ENCODE measurements at regions of chr9 and their contacts with region 1.

Region 1: GRCh38 chr9:104927912-104928740 is at the start of gene ABCA1:
- DNase-seq: peak; percentile 69
- H3K4me3 ChIP-seq: peak within 1 kb of the TSS; percentile 65 to 86 (median 82)
- H3K27ac ChIP-seq: peak within 1 kb of the TSS; percentile 45
- H3K4me1 ChIP-seq: peaks cover 8% of the 10 kb centered on the region
- H3K27me3 ChIP-seq: no peaks in the 10 kb centered on the region
- CTCF ChIP-seq: no peak
- total RNA-seq, gene ABCA1: 22.5 to 48.2 TPM

Region 2: GRCh38 chr9:104780799-104781395 is 147.2 kb before region 1 on chr9:
- CTCF ChIA-PET with region 1: no interaction called
- dilution Hi-C with region 1: no loop called
- in situ Hi-C with region 1: no loop called
- intact Hi-C with region 1: loop called (anchors 1 kb)
- DNase-seq: peak; percentile 43
- H3K4me3 ChIP-seq: no peak overlapping the region
- H3K27ac ChIP-seq: no peak overlapping the region
- H3K4me1 ChIP-seq: peaks cover 7% of the 10 kb centered on the region
- H3K27me3 ChIP-seq: no peaks in the 10 kb centered on the region
- CTCF ChIP-seq: peak; percentile 50 to 53

Region 3: DNA sequence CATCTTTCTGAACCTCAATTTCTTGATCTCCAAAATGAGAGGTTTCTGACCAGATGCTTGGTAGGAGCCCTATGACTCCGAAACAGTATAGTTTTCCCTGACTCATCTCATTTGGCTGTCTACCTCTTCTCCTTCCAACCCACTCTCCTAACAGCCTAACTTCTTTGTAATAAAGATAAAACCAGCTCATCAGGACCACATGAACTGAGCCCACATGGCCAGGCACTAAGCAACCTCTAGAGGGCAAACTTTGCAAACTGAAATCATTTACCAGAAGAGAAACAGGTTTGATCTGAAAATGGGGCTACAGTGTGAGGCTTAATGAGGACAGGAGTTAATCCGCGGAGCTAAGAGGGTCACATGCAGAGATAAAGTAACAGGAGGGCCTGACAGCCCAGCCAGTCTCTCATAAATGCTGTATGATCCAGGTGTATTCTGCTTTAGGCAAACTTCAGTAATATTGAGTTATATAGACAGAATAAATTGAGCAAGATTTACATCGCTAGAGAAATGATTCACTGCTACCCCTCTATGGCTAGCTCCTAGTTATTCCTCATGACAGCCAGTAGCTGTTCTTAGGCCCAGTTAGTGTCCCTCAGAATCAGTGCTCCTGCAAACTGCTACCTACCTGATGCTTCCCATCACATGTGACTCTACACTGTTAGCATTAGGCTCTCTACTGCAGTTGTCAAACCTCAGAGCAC is 64.8 kb before region 1 on chr9:
- CTCF ChIA-PET with region 1: interaction called, 6 read pairs
- dilution Hi-C with region 1: no loop called
- in situ Hi-C with region 1: no loop called
- intact Hi-C with region 1: loop called (anchors 1 kb)
- DNase-seq: peak; percentile 69
- H3K4me3 ChIP-seq: no peak overlapping the region
- H3K27ac ChIP-seq: no peak overlapping the region
- H3K4me1 ChIP-seq: peaks cover 27% of the 10 kb centered on the region
- H3K27me3 ChIP-seq: no peaks in the 10 kb centered on the region
- CTCF ChIP-seq: peak; percentile 85 to 94

Region 4: GRCh38 chr9:104968025-104968982 is 40.2 kb after region 1 on chr9:
- CTCF ChIA-PET with region 1: no interaction called
- dilution Hi-C with region 1: no loop called
- in situ Hi-C with region 1: loop called in 1 of 2 experiments (anchors 5 kb)
- intact Hi-C with region 1: loop called (anchors 1 kb)
- DNase-seq: peak; percentile 71
- H3K4me3 ChIP-seq: peak overlapping the region; percentile 63 to 93 (median 72)
- H3K27ac ChIP-seq: no peak overlapping the region
- H3K4me1 ChIP-seq: peaks cover 8% of the 10 kb centered on the region
- H3K27me3 ChIP-seq: no peaks in the 10 kb centered on the region
- CTCF ChIP-seq: no peak

Region 5: DNA sequence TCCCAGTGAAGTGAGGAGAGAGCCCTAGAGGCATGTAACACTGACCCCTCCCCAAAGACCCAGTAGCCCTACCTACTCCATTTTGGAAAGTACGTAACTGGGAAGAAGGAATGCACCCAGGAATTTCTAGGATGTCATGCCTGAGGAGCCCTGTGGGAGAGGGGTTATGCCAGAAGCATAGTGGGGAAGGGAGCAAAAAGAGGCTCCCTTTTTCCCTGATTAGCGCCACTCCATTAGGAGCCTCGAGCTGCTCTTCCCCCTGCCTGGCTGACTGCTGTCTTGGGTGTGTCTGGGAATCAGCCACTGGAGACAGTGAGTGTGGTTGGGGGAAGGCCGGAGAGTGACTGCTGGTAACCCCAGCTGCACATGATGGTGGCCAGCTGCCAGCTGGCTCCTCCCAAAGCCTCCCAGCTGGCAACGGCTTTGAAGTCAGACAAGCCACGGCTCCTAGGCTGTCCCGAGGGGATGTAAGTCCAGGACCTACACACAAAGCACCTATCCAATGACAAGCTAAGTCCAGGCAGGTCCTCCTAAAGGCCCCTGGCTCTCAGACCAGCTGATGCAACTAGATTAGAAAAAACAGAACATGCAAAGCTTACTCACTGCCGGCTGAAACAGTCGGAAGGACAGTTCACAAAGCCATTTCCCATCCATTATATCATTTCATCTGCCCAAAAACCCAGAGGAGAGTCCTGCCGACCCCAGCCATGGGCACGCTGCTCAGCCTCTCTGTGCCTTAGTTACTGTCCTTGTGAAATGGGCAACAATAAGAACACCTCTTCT is 136.4 kb after region 1 on chr9:
- CTCF ChIA-PET with region 1: interaction called, 3 read pairs
- dilution Hi-C with region 1: no loop called
- in situ Hi-C with region 1: no loop called
- intact Hi-C with region 1: loop called (anchors 1 kb)
- DNase-seq: peak; percentile 97
- H3K4me3 ChIP-seq: no peak overlapping the region
- H3K27ac ChIP-seq: peak overlapping the region; percentile 88
- H3K4me1 ChIP-seq: peaks cover 38% of the 10 kb centered on the region
- H3K27me3 ChIP-seq: no peaks in the 10 kb centered on the region
- CTCF ChIP-seq: no peak

Region 6: GRCh38 chr9:105157130-105157583 is 229.0 kb after region 1 on chr9:
- CTCF ChIA-PET with region 1: no interaction called
- dilution Hi-C with region 1: no loop called
- in situ Hi-C with region 1: loop called (anchors 5 kb)
- intact Hi-C with region 1: loop called (anchors 1 kb)
- DNase-seq: peak; percentile 60
- H3K4me3 ChIP-seq: no peak overlapping the region
- H3K27ac ChIP-seq: no peak overlapping the region
- H3K4me1 ChIP-seq: peaks cover 6% of the 10 kb centered on the region
- H3K27me3 ChIP-seq: no peaks in the 10 kb centered on the region
- CTCF ChIP-seq: peak; percentile 41 to 53

Region 7: DNA sequence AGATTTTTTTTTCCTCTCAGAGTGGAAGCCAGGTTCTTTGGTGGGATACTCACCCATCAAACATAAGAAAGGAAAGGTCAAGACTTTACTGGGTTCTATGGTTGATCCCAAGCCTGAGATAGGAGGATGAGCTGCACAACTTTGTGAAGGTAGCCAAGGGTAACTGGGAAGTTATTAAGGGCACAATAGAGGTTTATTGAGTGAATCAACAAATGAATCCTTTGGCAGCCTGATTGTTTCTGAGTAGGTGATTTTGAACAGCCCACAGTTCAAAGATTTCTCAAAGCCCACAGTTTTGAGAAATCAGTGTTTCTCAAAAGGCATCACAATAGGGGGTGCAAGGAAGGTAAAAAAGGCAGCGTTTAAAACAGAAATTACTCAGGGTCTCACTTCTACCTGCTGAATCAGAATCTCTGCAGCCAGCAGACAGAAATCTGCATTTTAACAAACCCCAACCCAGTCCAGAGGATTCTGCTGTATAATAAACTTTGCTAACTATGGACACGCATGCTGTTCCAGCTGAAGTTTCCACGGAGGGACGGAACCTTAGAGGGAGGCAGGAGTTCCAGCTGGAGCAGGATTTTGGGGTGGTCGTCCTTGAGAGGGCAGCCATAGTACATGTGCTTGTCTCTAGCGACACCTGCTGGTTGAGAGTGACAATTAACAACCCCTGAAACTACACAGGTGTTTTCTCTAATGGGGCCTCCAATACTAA is 487.0 kb after region 1 on chr9:
- CTCF ChIA-PET with region 1: no interaction called
- dilution Hi-C with region 1: no loop called
- in situ Hi-C with region 1: no loop called
- intact Hi-C with region 1: loop called (anchors 1 kb)
- DNase-seq: peak; percentile 22
- H3K4me3 ChIP-seq: no peak overlapping the region
- H3K27ac ChIP-seq: no peak overlapping the region
- H3K4me1 ChIP-seq: no peaks in the 10 kb centered on the region
- H3K27me3 ChIP-seq: no peaks in the 10 kb centered on the region
- CTCF ChIP-seq: peak; percentile 71 to 86